A673 (cell line): ENCODE measurements at regions of chr19 and their contacts with region 1.

Region 1: GRCh38 chr19:4867534-4868285 is at the start of gene PLIN3:
- DNase-seq: peak; percentile 93
- H3K4me3 ChIP-seq: peak within 1 kb of the TSS; percentile 84
- H3K27ac ChIP-seq: peak within 1 kb of the TSS; percentile 67
- H3K4me1 ChIP-seq: peaks cover 9% of the 10 kb centered on the region
- H3K27me3 ChIP-seq: no peaks in the 10 kb centered on the region
- CTCF ChIP-seq: no peak
- total RNA-seq, gene PLIN3: 30.6 and 39.9 TPM in 2 replicates

Region 2: DNA sequence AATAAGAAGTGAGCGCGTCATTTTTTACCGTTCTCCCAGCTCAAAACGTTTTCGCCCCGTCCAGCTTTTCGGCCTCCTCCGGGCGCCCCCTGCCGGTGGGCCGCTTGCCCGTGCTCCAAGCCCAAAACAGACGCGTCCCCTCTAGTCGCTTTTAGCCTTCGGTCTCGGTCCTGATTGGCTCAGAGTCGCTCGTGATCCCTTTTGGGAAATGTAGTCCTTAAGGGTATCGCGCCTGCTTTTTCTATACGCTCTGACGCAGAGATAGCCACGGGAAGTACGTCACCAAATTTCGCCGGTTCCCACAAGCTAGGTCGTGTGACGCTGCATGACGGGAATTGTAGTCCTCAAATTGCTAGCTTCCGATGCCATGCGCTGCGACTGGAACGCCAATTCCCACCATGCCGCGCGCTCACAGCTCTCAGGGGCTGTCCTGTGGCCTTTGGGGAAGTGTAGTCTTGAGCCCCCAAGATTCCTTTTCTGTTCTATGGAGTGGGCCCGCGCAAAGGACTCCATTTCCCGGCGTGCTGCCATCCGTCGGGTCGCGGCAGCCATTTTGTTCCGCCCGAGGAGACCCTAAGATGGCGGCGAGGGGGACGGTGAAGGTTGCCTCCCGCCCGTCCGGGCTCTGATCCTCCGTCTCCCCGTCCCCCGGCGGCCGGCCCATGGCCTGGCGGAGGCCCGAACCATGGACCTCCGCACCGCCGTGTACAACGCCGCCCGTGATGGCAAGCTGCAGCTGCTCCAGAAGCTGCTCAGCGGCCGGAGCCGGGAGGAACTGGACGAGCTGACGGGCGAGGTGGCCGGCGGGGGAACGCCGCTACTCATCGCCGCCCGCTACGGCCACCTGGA is 76.3 kb before region 1 on chr19 and contains the start of gene FEM1A:
- CTCF ChIA-PET with region 1: no interaction called
- POLR2A ChIA-PET with region 1: no interaction called
- intact Hi-C with region 1: no loop called
- DNase-seq: peak; percentile 100
- H3K4me3 ChIP-seq: peak within 1 kb of the TSS; percentile 80
- H3K27ac ChIP-seq: peak within 1 kb of the TSS; percentile 93
- H3K4me1 ChIP-seq: peaks cover 21% of the 10 kb centered on the region
- H3K27me3 ChIP-seq: no peaks in the 10 kb centered on the region
- CTCF ChIP-seq: peak; percentile 100
- total RNA-seq, gene FEM1A: 17.4 and 18.9 TPM in 2 replicates

Region 3: DNA sequence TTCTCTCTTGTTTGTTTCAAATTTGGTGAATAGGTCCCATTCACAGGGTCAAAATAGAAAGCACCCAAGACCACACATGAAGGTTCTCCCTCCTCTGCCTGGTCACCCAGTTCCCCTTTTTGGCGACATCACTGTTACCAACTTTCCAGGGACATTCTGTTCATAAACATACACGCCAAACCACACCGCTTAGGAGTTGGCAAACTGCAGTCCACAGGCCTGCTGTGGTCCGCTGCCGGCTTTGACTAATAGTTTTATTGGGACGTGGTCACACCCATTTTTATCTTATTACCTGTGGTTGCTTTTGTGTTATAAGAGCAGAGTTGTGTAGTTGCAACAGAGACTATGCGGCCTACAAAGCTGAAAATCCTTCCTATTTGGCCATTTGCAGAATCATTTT is 65.8 kb after region 1 on chr19:
- CTCF ChIA-PET with region 1: no interaction called
- POLR2A ChIA-PET with region 1: interaction called, 15 read pairs
- intact Hi-C with region 1: no loop called
- DNase-seq: no peak
- H3K4me3 ChIP-seq: no peak overlapping the region
- H3K27ac ChIP-seq: no peak overlapping the region
- H3K4me1 ChIP-seq: no peaks in the 10 kb centered on the region
- H3K27me3 ChIP-seq: no peaks in the 10 kb centered on the region
- CTCF ChIP-seq: no peak

Region 4: DNA sequence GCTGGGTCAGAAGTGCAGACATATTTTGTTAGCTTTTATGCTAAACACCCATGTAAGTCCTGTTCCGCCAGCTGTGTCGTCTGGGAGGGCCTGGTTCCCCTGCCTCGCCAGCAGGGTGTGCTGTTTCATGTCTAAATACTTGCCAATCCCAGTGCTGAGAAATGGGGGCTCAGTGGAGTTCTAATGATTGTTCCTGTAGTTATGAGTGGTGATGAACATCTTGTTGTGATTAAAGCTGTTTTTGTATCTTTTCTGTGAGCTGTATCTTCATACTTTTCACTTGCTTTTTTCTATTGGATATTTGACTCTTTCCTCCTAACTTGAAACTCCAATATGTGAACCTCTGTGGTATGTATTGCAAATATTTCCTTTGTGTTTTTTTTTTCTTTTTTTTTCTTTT is 133.9 kb after region 1 on chr19:
- CTCF ChIA-PET with region 1: interaction called, 16 read pairs
- POLR2A ChIA-PET with region 1: no interaction called
- intact Hi-C with region 1: no loop called
- DNase-seq: peak; percentile 71
- H3K4me3 ChIP-seq: no peak overlapping the region
- H3K27ac ChIP-seq: no peak overlapping the region
- H3K4me1 ChIP-seq: no peaks in the 10 kb centered on the region
- H3K27me3 ChIP-seq: no peaks in the 10 kb centered on the region
- CTCF ChIP-seq: peak; percentile 89

Region 5: GRCh38 chr19:5031231-5032100 is 163.8 kb after region 1 on chr19:
- CTCF ChIA-PET with region 1: interaction called, 21 read pairs
- POLR2A ChIA-PET with region 1: no interaction called
- intact Hi-C with region 1: loop called (anchors 1 kb)
- DNase-seq: peak; percentile 88
- H3K4me3 ChIP-seq: no peak overlapping the region
- H3K27ac ChIP-seq: peak overlapping the region; percentile 25
- H3K4me1 ChIP-seq: peaks cover 30% of the 10 kb centered on the region
- H3K27me3 ChIP-seq: no peaks in the 10 kb centered on the region
- CTCF ChIP-seq: peak; percentile 98